ENCODE measurements at regions of chr3 and their contacts with region 1.

Region 1: DNA sequence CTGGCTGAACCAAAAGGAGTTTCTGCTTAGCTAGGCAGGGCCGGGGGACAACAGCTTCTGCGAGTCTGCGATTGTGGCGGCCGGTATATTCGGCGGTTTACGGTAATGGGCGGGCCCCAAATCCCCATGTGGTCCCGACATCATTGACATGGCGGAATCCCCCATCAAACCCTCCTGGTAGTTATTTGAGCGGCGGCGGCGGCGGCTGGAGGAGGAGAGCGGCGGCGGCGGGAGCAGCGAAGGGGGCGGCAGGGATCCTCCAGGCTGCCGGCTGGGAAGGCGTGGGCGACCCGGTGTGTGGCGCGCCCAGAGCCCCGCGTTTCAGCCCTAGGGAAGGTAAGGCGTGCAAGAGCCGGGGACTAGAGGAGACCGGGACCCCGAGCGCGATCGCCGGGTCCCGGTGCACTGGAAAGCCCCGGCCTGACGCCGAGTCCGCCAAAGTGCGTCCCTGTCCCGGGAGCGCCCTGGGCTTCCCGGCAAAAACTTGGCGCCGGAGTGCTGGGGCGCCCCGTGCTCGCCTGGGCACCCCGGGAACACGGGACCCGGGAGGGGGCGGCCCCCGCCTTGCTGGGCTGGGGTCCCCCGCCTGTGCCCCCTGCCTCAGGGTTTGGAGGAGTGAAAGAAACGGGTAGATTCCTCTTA is at the start of gene FNDC3B:
- DNase-seq: peak; percentile 81
- ATAC-seq: peak; percentile 90
- H3K4me3 Mint-ChIP-seq: peak within 1 kb of the TSS; percentile 97
- H3K27ac Mint-ChIP-seq: peak within 1 kb of the TSS; percentile 88
- H3K4me1 Mint-ChIP-seq: peaks cover 7% of the 10 kb centered on the region
- H3K27me3 Mint-ChIP-seq: peaks cover 8% of the 10 kb centered on the region
- CTCF ChIP-seq: no peak
- total RNA-seq, gene FNDC3B: 8.0 and 9.3 TPM in 2 replicates

Region 2: DNA sequence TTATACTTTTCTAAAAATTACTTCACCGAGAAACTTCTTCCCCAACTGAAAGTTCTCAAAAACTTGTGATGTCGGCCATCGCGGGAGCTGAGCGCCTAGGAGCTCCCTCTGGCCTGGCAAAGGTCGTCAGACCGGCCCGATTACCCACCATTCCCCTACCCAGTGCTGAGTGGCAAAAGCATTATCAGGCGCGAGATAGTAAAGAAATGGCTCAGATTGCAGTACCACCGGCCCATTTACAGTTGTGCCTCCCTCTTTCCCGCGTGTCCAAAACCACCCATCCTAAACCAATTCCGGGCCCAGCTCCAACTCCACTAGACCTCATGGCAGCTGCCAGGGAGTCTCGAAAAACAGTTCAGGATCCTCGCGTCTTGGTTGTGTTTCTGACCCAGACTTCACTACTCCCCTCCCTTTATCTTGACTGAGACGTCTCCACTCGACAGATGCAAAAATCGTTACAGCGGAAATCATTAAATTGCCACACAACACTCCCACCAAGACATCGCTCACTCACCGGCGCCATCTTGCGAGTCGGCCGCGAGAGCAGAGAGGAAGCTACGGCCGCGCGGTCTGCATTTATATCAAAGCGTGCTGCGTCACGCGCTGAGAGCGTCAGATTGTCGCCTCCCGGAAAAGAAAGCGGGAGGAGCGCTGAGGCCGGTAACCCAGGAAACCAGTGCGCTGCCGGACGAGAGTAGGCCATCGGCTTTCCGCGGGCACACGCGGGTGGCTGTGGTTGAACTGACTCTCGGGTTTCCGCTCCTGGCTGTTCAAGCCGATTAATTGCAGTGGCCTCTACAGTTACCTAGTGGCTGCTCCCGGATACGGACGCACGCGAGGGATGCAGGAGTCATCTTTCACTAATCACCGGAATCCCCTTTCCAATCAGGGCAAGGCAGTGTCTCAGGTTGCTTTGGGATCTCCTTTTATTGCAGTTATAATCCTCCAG is 1169.6 kb before region 1 on chr3 and contains the start of gene RPL22L1:
- CTCF ChIA-PET with region 1: no interaction called
- POLR2A ChIA-PET with region 1: no interaction called
- intact Hi-C with region 1: loop called (anchors 10 kb)
- DNase-seq: peak; percentile 89
- ATAC-seq: peak; percentile 86
- H3K4me3 Mint-ChIP-seq: peak within 1 kb of the TSS; percentile 95
- H3K27ac Mint-ChIP-seq: peak within 1 kb of the TSS; percentile 97
- H3K4me1 Mint-ChIP-seq: peaks cover 34% of the 10 kb centered on the region
- H3K27me3 Mint-ChIP-seq: no peaks in the 10 kb centered on the region
- CTCF ChIP-seq: no peak
- total RNA-seq, gene RPL22L1: 109 and 124 TPM in 2 replicates

Region 3: DNA sequence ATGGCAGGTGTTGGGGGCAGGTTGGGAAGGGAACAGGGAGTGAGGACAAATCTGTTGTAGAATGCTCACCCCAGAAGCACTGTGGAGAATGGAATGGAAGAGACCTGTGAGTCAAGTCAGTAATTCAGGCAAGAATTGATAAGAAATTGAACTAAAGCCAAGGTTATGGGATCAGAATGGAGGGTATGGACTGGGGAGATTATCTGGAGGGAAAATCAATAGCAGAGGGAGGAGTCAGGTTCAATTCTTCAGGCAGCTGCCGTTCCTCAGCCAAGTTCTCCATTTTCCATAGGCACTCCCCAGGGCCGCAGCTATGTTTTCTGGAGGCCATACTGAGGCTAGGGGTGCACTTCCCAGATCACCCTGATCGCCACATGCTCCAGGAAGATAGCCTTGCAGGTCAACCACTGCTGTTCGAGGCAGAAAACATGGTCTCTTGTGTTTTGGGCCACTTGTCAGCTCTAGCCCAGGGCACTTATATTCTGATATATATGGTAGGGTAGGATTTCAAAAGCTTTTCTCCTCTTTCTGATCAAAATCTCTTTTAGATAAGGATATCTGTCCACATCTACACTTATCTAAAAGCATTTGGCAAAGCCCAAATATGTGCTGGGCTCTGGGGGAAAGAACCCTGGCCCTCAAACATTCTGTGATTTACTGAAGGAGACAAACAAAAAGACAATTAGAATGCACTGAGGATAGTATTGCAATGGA is 104.1 kb before region 1 on chr3:
- CTCF ChIA-PET with region 1: no interaction called
- POLR2A ChIA-PET with region 1: no interaction called
- intact Hi-C with region 1: loop called (anchors 1 kb)
- DNase-seq: no peak
- ATAC-seq: no peak
- H3K4me3 Mint-ChIP-seq: no peak overlapping the region
- H3K27ac Mint-ChIP-seq: no peak overlapping the region
- H3K4me1 Mint-ChIP-seq: no peaks in the 10 kb centered on the region
- H3K27me3 Mint-ChIP-seq: peaks cover 4% of the 10 kb centered on the region
- CTCF ChIP-seq: no peak

Region 4: DNA sequence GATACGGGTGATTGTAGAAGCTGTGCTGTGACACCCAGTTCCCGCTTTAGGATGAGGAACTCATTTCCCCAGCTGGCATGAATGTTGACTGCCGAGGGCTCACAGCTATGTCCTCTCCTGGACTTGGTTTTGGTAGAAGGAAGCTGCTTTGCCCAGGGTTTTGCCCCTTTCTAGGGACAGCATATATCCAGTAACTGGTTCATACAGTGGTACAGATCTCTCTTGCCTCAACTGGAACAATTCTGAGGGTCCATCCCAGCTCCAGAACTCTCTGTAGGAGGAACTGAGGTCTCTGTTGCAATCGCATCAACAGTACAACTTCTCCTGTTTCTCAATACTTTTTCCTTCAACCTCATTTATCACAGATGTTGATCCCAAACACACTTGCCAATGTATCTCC is 54.7 kb before region 1 on chr3:
- CTCF ChIA-PET with region 1: no interaction called
- POLR2A ChIA-PET with region 1: no interaction called
- intact Hi-C with region 1: no loop called
- DNase-seq: no peak
- ATAC-seq: no peak
- H3K4me3 Mint-ChIP-seq: no peak overlapping the region
- H3K27ac Mint-ChIP-seq: no peak overlapping the region
- H3K4me1 Mint-ChIP-seq: no peaks in the 10 kb centered on the region
- H3K27me3 Mint-ChIP-seq: peaks cover 9% of the 10 kb centered on the region
- CTCF ChIP-seq: no peak

Region 5: GRCh38 chr3:172106989-172107388 is 67.4 kb after region 1 on chr3:
- CTCF ChIA-PET with region 1: interaction called, 6 read pairs
- POLR2A ChIA-PET with region 1: no interaction called
- intact Hi-C with region 1: loop called (anchors 1 kb)
- DNase-seq: no peak
- ATAC-seq: peak; percentile 56
- H3K4me3 Mint-ChIP-seq: peak overlapping the region; percentile 55
- H3K27ac Mint-ChIP-seq: peak overlapping the region; percentile 43
- H3K4me1 Mint-ChIP-seq: peaks cover 34% of the 10 kb centered on the region
- H3K27me3 Mint-ChIP-seq: peaks cover 50% of the 10 kb centered on the region
- CTCF ChIP-seq: no peak

Region 6: GRCh38 chr3:172224560-172225214 is 185.1 kb after region 1 on chr3:
- CTCF ChIA-PET with region 1: no interaction called
- POLR2A ChIA-PET with region 1: no interaction called
- intact Hi-C with region 1: no loop called
- DNase-seq: no peak
- ATAC-seq: no peak
- H3K4me3 Mint-ChIP-seq: no peak overlapping the region
- H3K27ac Mint-ChIP-seq: no peak overlapping the region
- H3K4me1 Mint-ChIP-seq: no peaks in the 10 kb centered on the region
- H3K27me3 Mint-ChIP-seq: no peaks in the 10 kb centered on the region
- CTCF ChIP-seq: no peak

Region 7: GRCh38 chr3:172256101-172256734 is 216.7 kb after region 1 on chr3:
- CTCF ChIA-PET with region 1: no interaction called
- POLR2A ChIA-PET with region 1: no interaction called
- intact Hi-C with region 1: no loop called
- DNase-seq: no peak
- ATAC-seq: no peak
- H3K4me3 Mint-ChIP-seq: no peak overlapping the region
- H3K27ac Mint-ChIP-seq: no peak overlapping the region
- H3K4me1 Mint-ChIP-seq: no peaks in the 10 kb centered on the region
- H3K27me3 Mint-ChIP-seq: no peaks in the 10 kb centered on the region
- CTCF ChIP-seq: no peak

Region 8: GRCh38 chr3:172341482-172342059 is 302.0 kb after region 1 on chr3:
- CTCF ChIA-PET with region 1: interaction called, 23 read pairs
- POLR2A ChIA-PET with region 1: no interaction called
- intact Hi-C with region 1: loop called (anchors 1 kb)
- DNase-seq: no peak
- ATAC-seq: peak; percentile 58
- H3K4me3 Mint-ChIP-seq: no peak overlapping the region
- H3K27ac Mint-ChIP-seq: no peak overlapping the region
- H3K4me1 Mint-ChIP-seq: no peaks in the 10 kb centered on the region
- H3K27me3 Mint-ChIP-seq: no peaks in the 10 kb centered on the region
- CTCF ChIP-seq: peak; percentile 53

Region 9: DNA sequence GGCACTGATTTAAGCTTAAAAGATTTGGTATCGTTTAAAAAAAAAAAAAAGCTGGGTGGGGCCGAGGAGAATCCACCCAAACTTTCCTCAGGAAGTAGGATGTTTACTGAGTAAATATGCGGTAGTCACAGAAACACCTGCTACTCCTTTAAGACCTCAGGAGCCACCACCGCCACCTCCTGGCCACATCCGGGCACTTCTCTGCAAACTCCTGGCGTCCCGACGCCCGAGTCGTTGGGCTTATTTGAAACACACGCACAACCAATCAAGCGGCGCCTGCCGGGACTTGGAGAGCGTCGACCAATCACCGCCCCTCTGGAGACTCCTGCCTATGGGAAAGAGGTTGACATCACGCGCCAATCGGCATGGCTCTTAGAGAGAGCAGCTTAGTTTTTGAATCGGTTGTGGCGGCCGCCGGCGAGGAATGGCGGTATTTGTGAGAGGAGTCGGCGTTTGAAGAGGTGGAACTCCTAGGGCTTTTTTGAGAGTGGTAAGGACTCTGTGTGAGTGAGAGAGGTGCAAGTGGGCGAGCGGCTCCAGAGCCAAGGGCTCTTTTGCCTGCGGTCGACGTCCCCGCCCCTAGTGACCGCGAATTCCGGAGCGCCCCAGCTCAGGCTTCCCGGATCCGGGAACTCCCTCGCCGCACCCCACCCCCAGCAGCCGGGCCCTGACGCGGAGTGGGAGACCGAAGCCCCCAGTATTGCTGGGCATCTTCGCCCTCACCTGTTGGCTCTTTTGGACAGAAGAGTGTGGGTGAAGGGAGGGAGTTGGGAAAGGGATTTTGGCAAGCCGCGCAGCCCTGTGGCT is 711.0 kb after region 1 on chr3 and contains the start of gene ECT2:
- CTCF ChIA-PET with region 1: no interaction called
- POLR2A ChIA-PET with region 1: no interaction called
- intact Hi-C with region 1: loop called (anchors 1 kb)
- DNase-seq: peak; percentile 84
- ATAC-seq: peak; percentile 99
- H3K4me3 Mint-ChIP-seq: peak within 1 kb of the TSS; percentile 99
- H3K27ac Mint-ChIP-seq: peak within 1 kb of the TSS; percentile 91
- H3K4me1 Mint-ChIP-seq: peaks cover 14% of the 10 kb centered on the region
- H3K27me3 Mint-ChIP-seq: no peaks in the 10 kb centered on the region
- CTCF ChIP-seq: no peak
- total RNA-seq, gene ECT2: 5.0 and 6.3 TPM in 2 replicates

Measured in activated B cell treated with CpG ODN at 0.5 μM for 24 hours (primary cell).